GM18951 (cell line): ENCODE measurements at regions of chr9 and their contacts with region 1.

Region 1: DNA sequence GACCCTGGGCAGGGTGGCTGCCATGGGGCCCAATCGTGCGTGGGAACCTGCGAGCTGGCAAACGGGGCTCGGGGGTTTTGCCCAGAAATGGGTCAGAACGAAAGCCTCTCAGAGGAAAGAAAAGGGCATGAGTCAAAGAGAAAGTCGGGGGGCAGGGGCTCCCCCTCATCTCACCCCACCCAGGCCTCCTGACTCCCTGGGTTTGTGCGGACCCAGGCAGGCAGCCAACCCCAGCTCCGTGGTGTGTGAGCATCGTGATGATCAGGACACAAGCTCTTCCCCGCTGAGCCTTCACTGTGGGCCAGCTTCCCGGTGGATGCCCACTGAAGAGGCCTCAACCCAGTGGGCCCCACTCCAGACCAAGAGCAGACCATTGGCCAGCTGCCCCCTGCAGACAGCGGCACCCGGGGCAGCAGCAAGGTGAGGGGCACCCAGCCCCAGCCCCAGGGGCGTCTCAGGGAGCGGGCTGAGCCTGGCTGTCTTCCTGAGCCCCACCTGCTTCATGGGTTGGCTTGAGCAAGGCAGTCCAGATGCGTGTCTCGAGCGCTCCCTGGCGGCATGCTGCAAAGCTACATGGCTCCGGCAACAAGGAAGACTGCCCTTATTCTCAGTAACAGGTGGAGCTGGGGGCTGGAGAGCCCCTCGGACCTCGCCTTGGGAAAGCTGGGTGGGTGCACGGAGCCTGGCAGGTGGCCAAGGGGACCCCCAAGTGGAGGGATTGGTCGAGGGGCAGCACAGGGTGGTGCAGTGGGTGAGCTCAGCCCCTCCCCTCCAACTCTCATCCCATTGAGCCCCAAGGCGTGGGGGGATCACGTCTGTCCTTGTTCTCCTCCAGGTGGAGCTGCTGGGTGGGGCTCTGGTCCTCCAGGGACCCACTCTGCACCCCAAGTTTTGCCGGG is 3.2 kb upstream of the FUT7 start:
- POLR2A ChIP-seq: no peak

Region 2: GRCh38 chr9:136790927-136791641 is 244.0 kb before region 1 on chr9 and contains the start of gene TMEM141:
- in situ Hi-C with region 1: loop called (anchors 25 kb)
- POLR2A ChIP-seq: peak; percentile 88